ENCODE measurements at regions of chr18 and their contacts with region 1.

Region 1: GRCh38 chr18:62186774-62187542 is at the starts of genes PIGN and RELCH:
- DNase-seq: peak; percentile 99
- H3K4me3 Mint-ChIP-seq: peak within 1 kb of the TSS; percentile 100
- H3K27ac Mint-ChIP-seq: peak within 1 kb of the TSS; percentile 95
- H3K4me1 Mint-ChIP-seq: peaks cover 11% of the 10 kb centered on the region
- H3K27me3 Mint-ChIP-seq: no peaks in the 10 kb centered on the region
- CTCF ChIP-seq: no peak
- total RNA-seq, gene PIGN: 29.4 and 29.5 TPM in 2 replicates
- total RNA-seq, gene RELCH: 20.7 and 24.7 TPM in 2 replicates

Region 2: GRCh38 chr18:62109676-62110075 is 77.3 kb before region 1 on chr18:
- CTCF ChIA-PET with region 1: no interaction called
- POLR2A ChIA-PET with region 1: no interaction called
- intact Hi-C with region 1: no loop called
- DNase-seq: no peak
- H3K4me3 Mint-ChIP-seq: no peak overlapping the region
- H3K27ac Mint-ChIP-seq: no peak overlapping the region
- H3K4me1 Mint-ChIP-seq: no peaks in the 10 kb centered on the region
- H3K27me3 Mint-ChIP-seq: no peaks in the 10 kb centered on the region
- CTCF ChIP-seq: no peak

Region 3: DNA sequence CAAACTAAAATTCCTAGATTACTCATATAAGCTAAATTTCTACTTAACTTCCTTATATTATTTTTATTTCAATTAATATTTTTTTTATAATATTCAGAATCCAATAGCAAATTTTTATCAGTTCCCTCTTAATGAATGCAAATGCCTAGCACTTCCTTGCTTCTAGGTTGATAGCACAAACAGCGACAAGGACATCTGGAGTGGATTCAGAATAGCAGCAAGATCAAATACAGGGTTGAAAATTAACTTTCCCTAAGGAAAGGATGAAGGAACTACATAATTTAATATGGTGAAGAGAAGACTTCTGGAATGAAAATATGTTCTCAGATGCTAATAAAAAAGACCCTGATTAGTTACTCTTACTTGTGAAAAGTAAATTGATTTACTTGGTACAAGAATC is 64.6 kb before region 1 on chr18:
- CTCF ChIA-PET with region 1: no interaction called
- POLR2A ChIA-PET with region 1: no interaction called
- intact Hi-C with region 1: no loop called
- DNase-seq: no peak
- H3K4me3 Mint-ChIP-seq: no peak overlapping the region
- H3K27ac Mint-ChIP-seq: no peak overlapping the region
- H3K4me1 Mint-ChIP-seq: peaks cover 10% of the 10 kb centered on the region
- H3K27me3 Mint-ChIP-seq: no peaks in the 10 kb centered on the region
- CTCF ChIP-seq: no peak

Region 4: GRCh38 chr18:62175521-62175920 is 11.4 kb before region 1 on chr18:
- CTCF ChIA-PET with region 1: interaction called, 12 read pairs
- POLR2A ChIA-PET with region 1: interaction called, 5 read pairs
- intact Hi-C with region 1: no loop called
- DNase-seq: no peak
- H3K4me3 Mint-ChIP-seq: no peak overlapping the region
- H3K27ac Mint-ChIP-seq: no peak overlapping the region
- H3K4me1 Mint-ChIP-seq: peaks cover 6% of the 10 kb centered on the region
- H3K27me3 Mint-ChIP-seq: no peaks in the 10 kb centered on the region
- CTCF ChIP-seq: no peak

Region 5: DNA sequence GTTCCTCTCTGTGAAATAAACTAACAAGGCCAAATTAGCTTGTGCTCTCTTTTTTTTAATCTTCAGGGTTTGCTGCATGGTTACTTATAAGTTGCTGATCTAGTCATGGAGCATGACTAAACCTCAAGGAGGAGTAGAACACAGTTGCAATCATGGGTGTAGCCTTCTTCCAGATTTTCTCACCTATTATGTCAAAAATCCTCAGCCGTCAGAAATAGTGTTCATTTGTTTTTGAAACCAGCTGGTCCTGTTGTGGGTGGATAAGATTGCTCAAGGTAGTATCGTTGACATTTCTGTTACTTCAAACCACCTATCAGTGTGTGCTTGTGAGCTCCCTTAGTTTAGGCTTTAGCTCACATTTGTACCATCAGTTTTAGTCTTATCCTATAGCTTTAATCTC is 11.3 kb after region 1 on chr18:
- CTCF ChIA-PET with region 1: interaction called, 10 read pairs
- POLR2A ChIA-PET with region 1: interaction called, 146 read pairs
- intact Hi-C with region 1: no loop called
- DNase-seq: peak; percentile 41
- H3K4me3 Mint-ChIP-seq: no peak overlapping the region
- H3K27ac Mint-ChIP-seq: peak overlapping the region; percentile 68
- H3K4me1 Mint-ChIP-seq: peaks cover 14% of the 10 kb centered on the region
- H3K27me3 Mint-ChIP-seq: no peaks in the 10 kb centered on the region
- CTCF ChIP-seq: no peak

Region 6: GRCh38 chr18:62249478-62250097 is 62.6 kb after region 1 on chr18:
- CTCF ChIA-PET with region 1: interaction called, 105 read pairs
- POLR2A ChIA-PET with region 1: interaction called, 122 read pairs
- intact Hi-C with region 1: loop called (anchors 1 kb)
- DNase-seq: peak; percentile 80
- H3K4me3 Mint-ChIP-seq: no peak overlapping the region
- H3K27ac Mint-ChIP-seq: no peak overlapping the region
- H3K4me1 Mint-ChIP-seq: no peaks in the 10 kb centered on the region
- H3K27me3 Mint-ChIP-seq: no peaks in the 10 kb centered on the region
- CTCF ChIP-seq: peak; percentile 55

Region 7: DNA sequence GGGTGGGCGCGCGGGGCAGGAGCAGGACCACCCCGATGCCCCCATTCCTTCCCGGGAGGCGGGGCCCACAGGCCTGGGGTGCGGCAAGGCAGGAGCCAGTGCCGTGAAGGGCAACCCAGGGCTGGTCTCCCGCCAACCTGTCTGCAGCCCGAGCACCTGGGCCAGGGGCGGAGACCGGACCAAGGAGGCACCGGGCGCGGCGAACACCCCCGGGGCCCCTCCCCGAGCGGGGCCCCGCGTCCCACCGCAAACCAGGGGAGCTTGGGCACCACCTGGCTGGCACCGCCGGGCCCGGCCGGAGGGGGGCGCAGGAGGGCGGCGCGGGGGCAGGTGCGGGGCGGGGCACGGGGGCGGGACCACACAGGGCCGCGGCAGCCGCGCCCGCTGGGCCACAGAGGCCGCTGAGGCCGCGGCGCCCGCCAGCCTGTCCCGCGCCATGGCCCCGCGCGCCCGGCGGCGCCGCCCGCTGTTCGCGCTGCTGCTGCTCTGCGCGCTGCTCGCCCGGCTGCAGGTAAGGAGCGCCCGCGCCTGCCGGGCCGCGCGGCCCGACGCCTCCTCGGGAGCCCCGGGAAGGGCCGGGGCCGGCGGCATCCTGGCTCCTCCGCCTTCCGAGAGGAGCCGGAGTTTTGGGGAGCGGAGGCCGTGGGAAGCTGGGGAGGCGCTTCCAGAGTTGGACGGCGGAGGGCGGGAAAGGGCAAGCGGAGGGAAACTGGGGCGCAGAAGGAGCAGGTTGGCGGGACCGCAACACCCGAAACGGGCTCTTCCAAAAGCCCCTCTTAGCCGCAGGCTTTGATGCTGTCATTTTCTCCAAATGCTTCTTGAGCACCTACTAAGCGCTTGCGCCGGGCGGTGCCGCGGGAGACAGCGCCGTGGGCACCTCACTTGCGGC is 138.2 kb after region 1 on chr18 and contains the start of gene TNFRSF11A:
- CTCF ChIA-PET with region 1: interaction called, 3 read pairs
- POLR2A ChIA-PET with region 1: interaction called, 3 read pairs
- intact Hi-C with region 1: loop called (anchors 5 kb)
- DNase-seq: peak; percentile 61
- H3K4me3 Mint-ChIP-seq: peak within 1 kb of the TSS; percentile 75
- H3K27ac Mint-ChIP-seq: no peak within 1 kb of the TSS
- H3K4me1 Mint-ChIP-seq: peaks cover 18% of the 10 kb centered on the region
- H3K27me3 Mint-ChIP-seq: peaks cover 30% of the 10 kb centered on the region
- CTCF ChIP-seq: peak; percentile 52
- total RNA-seq, gene TNFRSF11A: 2.3 and 3.0 TPM in 2 replicates

Region 8: GRCh38 chr18:62437235-62438017 is 250.5 kb after region 1 on chr18:
- CTCF ChIA-PET with region 1: interaction called, 5 read pairs
- POLR2A ChIA-PET with region 1: interaction called, 11 read pairs
- intact Hi-C with region 1: no loop called
- DNase-seq: peak; percentile 95
- H3K4me3 Mint-ChIP-seq: peak overlapping the region; percentile 55
- H3K27ac Mint-ChIP-seq: peak overlapping the region; percentile 93
- H3K4me1 Mint-ChIP-seq: peaks cover 18% of the 10 kb centered on the region
- H3K27me3 Mint-ChIP-seq: no peaks in the 10 kb centered on the region
- CTCF ChIP-seq: no peak

Region 9: DNA sequence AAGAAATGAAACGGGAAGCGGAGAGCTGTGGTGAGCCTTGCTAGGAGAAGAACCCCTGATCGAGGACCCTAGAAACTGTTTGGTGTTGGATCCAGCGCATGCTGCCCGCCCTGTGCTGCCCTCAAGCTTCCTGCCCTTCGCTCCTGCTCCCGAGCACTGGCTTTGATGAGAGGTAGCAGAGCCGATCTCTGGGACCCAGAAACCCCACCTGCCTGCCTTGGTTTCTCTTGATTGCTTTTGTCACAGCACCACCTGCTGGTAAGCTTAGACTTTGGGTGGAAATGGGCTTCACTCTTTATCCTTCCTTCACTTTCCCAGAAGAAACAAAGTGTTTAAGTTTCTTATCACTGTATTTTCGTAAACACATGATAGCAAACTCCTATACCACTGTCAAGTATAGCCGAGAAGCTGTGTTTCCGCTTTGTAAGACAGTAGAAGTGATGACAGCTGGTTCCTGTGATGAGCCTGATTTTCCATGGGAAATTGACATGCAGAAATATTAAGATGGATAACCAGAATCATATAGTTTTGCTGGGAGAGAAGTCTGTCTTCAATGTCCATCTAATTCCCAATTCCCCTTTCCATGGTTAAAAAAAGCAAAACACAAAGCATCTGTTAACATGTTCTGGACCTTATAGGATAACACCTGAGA is 795.8 kb after region 1 on chr18:
- CTCF ChIA-PET with region 1: no interaction called
- POLR2A ChIA-PET with region 1: no interaction called
- intact Hi-C with region 1: loop called (anchors 10 kb)
- DNase-seq: peak; percentile 71
- H3K4me3 Mint-ChIP-seq: no peak overlapping the region
- H3K27ac Mint-ChIP-seq: no peak overlapping the region
- H3K4me1 Mint-ChIP-seq: peaks cover 6% of the 10 kb centered on the region
- H3K27me3 Mint-ChIP-seq: no peaks in the 10 kb centered on the region
- CTCF ChIP-seq: peak; percentile 73